H1 (cell line): ENCODE measurements at regions of chr6 and their contacts with region 1.

Region 1: GRCh38 chr6:96760153-96760687 is 77.1 kb downstream of the GPR63 start:
- DNase-seq: no peak
- H3K4me3 ChIP-seq: no peak overlapping the region
- H3K27ac ChIP-seq: no peak overlapping the region
- H3K4me1 ChIP-seq: peaks cover 0 to 4% (median 0%) of the 10 kb centered on the region in 4 experiments; a peak in 1 of 7 replicates
- H3K27me3 ChIP-seq: no peaks in the 10 kb centered on the region
- CTCF ChIP-seq: peak in 1 of 3 experiments; percentile 23; a peak in 1 of 4 replicates
- EP300 ChIP-seq: no peak
- POLR2A ChIP-seq: no peak
- RAD21 ChIP-seq: peak; percentile 52 to 65; a peak in 3 of 4 replicates

Region 2: DNA sequence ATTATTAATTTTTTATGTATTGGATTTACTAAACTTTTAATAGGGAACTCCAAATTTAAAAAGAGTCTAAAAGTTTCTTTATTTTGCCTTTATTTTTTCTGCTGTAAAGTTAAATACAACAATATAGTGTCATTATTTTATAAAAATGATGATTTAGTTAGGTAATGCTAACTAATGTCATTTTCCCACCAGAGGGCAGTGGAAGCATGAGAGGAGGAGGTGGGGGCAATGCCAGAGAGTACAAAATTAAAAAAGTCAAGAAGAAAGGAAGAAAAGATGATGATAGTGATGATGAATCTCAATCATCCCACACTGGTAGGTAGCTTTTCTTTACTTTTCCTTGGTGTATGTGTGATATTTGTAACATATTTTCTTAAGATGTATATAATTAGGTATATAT is 217.5 kb before region 1 on chr6:
- CTCF ChIA-PET with region 1: no interaction called
- POLR2A ChIA-PET with region 1: no interaction called
- DNase-seq: no peak
- H3K4me3 ChIP-seq: no peak overlapping the region
- H3K27ac ChIP-seq: no peak overlapping the region
- H3K4me1 ChIP-seq: no peaks in the 10 kb centered on the region
- H3K27me3 ChIP-seq: no peaks in the 10 kb centered on the region
- CTCF ChIP-seq: peak in 2 of 3 experiments; percentile 32 to 45; a peak in 2 of 4 replicates
- EP300 ChIP-seq: no peak
- POLR2A ChIP-seq: no peak
- RAD21 ChIP-seq: peak; percentile 68 to 70

Region 3: GRCh38 chr6:96626759-96627364 is 133.4 kb before region 1 on chr6:
- CTCF ChIA-PET with region 1: interaction called, 11 read pairs
- POLR2A ChIA-PET with region 1: no interaction called
- DNase-seq: no peak
- H3K4me3 ChIP-seq: no peak overlapping the region
- H3K27ac ChIP-seq: no peak overlapping the region
- H3K4me1 ChIP-seq: no peaks in the 10 kb centered on the region
- H3K27me3 ChIP-seq: no peaks in the 10 kb centered on the region
- CTCF ChIP-seq: no peak; a peak in 1 of 4 replicates
- EP300 ChIP-seq: no peak
- POLR2A ChIP-seq: no peak
- RAD21 ChIP-seq: peak; percentile 58 to 59

Region 4: GRCh38 chr6:96789871-96790270 is 29.7 kb after region 1 on chr6:
- CTCF ChIA-PET with region 1: no interaction called
- POLR2A ChIA-PET with region 1: no interaction called
- DNase-seq: no peak
- H3K4me3 ChIP-seq: no peak overlapping the region
- H3K27ac ChIP-seq: no peak overlapping the region
- H3K4me1 ChIP-seq: peaks cover 0 to 9% (median 2%) of the 10 kb centered on the region in 4 experiments; a peak in 2 of 7 replicates
- H3K27me3 ChIP-seq: no peaks in the 10 kb centered on the region
- CTCF ChIP-seq: no peak
- EP300 ChIP-seq: no peak
- POLR2A ChIP-seq: no peak
- RAD21 ChIP-seq: no peak